GM10248 (cell line): ENCODE measurements at regions of chr14 and their contacts with region 1.

Region 1: GRCh38 chr14:68816262-68816942 is 23.5 kb upstream of the ZFP36L1 start:
- DNase-seq: peak; percentile 89
- CTCF ChIP-seq: peak; percentile 90

Region 2: DNA sequence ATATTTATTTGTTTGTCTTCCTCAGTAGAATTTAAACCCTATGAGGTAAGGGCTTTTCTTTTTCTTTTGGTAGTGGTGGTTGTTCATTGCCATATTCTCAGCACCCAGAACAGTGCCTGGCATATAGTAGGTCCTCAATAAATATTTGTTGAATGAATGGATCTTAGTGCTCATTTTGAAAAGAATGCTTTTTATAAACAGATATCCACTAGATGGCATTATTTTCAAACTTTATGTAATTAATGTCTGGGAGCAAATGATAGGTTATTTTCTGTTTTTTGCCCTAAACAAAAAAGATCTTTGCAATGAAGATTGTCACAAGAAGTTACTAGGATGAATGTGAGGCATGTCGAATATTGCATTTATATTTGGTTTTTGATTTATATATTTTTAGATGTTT is 932.7 kb before region 1 on chr14:
- CTCF ChIA-PET with region 1: interaction called, 15 read pairs
- POLR2A ChIA-PET with region 1: no interaction called
- DNase-seq: no peak
- CTCF ChIP-seq: peak; percentile 18

Region 3: DNA sequence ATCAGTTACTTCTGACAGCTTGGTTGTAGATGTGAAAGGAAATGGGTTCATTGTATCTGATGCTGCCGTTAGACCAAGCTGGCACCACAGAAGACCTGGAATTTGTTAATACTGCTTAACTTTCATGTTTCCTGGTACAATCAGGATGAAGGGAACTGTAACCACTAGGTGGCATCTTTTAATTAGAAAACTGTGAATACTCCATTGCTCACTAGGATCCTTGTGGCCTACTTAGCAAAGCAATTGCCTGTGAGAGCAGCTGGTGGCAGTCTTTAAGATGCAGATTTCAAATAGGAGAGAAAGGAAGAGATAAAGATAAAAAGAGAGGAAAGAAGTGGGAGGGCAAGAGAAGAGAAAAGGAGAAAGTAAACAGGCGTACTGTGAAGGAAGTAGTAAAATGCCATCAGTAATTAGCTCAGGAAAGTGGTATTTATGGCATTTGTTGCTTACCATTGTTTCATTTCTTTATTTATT is 882.4 kb before region 1 on chr14:
- CTCF ChIA-PET with region 1: interaction called, 32 read pairs
- POLR2A ChIA-PET with region 1: no interaction called
- DNase-seq: peak; percentile 40
- CTCF ChIP-seq: peak; percentile 44